MCF 10A (cell line): ENCODE measurements at regions of chr5 and their contacts with region 1.

Region 1: DNA sequence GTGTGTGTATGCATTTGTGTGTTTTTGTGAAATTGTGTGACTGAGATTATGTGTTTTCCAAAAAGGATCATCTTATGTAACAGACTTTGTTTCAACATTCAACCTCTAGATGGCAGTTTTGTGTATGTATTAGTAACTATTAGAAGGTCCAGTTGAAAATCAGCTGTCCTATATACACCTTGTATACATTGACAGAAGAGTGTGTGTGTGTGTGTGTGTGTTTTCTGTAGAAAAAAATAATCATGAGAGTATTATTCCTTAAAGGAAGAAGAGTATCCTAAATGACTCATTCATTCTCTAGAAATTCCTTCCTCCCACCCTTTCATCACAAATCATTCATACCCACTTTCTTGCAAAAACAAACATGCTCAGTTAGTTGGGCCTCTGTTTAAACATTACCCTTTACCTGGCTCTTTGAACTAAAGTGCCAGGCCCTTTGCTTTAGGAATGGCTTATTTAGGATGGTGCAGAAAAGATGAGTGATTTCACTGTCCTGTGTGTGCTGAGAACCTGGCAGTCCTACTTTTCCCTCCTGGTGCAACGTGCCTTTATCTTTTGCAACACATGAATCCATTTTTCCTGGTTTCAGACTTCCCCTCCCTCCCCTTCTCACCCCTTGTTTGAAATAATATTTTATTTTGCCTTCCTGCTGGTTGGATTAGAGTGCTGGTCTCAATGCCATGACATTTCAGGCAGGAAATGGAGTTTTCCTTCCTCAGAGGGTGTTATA is 152.2 kb downstream of the ARHGAP26 start:
- DNase-seq: peak; percentile 56
- H3K4me3 Mint-ChIP-seq: no peak overlapping the region
- H3K27ac Mint-ChIP-seq: no peak overlapping the region
- H3K4me1 Mint-ChIP-seq: peaks cover 25% of the 10 kb centered on the region
- H3K27me3 Mint-ChIP-seq: no peaks in the 10 kb centered on the region
- CTCF ChIP-seq: peak; percentile 68

Region 2: DNA sequence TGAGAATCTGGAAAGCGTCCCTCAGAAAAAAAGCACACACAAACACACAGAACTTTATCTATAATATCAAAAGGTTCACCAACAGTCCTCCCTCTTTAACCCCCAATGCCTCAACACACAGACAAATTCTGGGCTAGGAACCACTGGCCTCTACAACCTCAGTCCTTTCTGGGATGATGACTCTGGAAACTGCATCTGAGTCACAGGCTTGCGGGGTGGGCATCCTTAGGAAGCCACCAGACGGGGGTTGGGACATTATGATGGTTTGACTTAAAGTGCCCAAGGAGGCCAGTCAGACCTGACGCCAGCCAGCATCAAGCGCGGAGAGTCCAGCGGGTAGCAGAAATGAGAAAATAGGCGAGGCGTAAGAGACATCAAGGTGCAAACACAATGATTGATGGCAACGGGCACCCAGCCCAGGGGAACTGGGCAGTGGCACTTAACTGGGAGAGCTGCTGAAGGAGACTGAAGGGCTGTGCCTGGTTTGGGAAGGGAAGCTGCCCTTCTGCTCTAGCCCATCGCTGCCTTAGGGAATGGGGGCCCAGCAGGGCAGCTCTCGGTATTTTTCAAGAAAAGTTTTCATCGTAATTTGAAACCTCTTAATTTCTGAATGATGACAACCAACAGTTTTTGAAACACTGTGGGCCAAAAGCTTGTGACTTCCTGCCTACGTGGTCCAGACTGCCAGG is 618.2 kb before region 1 on chr5:
- CTCF ChIA-PET with region 1: no interaction called
- POLR2A ChIA-PET with region 1: no interaction called
- intact Hi-C with region 1: no loop called
- DNase-seq: no peak
- H3K4me3 Mint-ChIP-seq: no peak overlapping the region
- H3K27ac Mint-ChIP-seq: no peak overlapping the region
- H3K4me1 Mint-ChIP-seq: peaks cover 6% of the 10 kb centered on the region
- H3K27me3 Mint-ChIP-seq: no peaks in the 10 kb centered on the region
- CTCF ChIP-seq: no peak

Region 3: GRCh38 chr5:143002459-143003328 is 80.3 kb after region 1 on chr5:
- CTCF ChIA-PET with region 1: interaction called, 16 read pairs
- POLR2A ChIA-PET with region 1: interaction called, 12 read pairs
- intact Hi-C with region 1: loop called (anchors 1 kb)
- DNase-seq: peak; percentile 96
- H3K4me3 Mint-ChIP-seq: no peak overlapping the region
- H3K27ac Mint-ChIP-seq: peak overlapping the region; percentile 92
- H3K4me1 Mint-ChIP-seq: peaks cover 29% of the 10 kb centered on the region
- H3K27me3 Mint-ChIP-seq: no peaks in the 10 kb centered on the region
- CTCF ChIP-seq: peak; percentile 72

Region 4: GRCh38 chr5:143177263-143177983 is 255.0 kb after region 1 on chr5:
- CTCF ChIA-PET with region 1: interaction called, 3 read pairs
- POLR2A ChIA-PET with region 1: no interaction called
- intact Hi-C with region 1: loop called (anchors 10 kb)
- DNase-seq: peak; percentile 99
- H3K4me3 Mint-ChIP-seq: no peak overlapping the region
- H3K27ac Mint-ChIP-seq: peak overlapping the region; percentile 86
- H3K4me1 Mint-ChIP-seq: peaks cover 16% of the 10 kb centered on the region
- H3K27me3 Mint-ChIP-seq: no peaks in the 10 kb centered on the region
- CTCF ChIP-seq: no peak

Region 5: GRCh38 chr5:143314659-143315058 is 392.3 kb after region 1 on chr5:
- CTCF ChIA-PET with region 1: interaction called, 4 read pairs
- POLR2A ChIA-PET with region 1: interaction called, 3 read pairs
- intact Hi-C with region 1: loop called (anchors 10 kb)
- DNase-seq: peak; percentile 68
- H3K4me3 Mint-ChIP-seq: no peak overlapping the region
- H3K27ac Mint-ChIP-seq: peak overlapping the region; percentile 73
- H3K4me1 Mint-ChIP-seq: peaks cover 69% of the 10 kb centered on the region
- H3K27me3 Mint-ChIP-seq: no peaks in the 10 kb centered on the region
- CTCF ChIP-seq: no peak

Region 6: DNA sequence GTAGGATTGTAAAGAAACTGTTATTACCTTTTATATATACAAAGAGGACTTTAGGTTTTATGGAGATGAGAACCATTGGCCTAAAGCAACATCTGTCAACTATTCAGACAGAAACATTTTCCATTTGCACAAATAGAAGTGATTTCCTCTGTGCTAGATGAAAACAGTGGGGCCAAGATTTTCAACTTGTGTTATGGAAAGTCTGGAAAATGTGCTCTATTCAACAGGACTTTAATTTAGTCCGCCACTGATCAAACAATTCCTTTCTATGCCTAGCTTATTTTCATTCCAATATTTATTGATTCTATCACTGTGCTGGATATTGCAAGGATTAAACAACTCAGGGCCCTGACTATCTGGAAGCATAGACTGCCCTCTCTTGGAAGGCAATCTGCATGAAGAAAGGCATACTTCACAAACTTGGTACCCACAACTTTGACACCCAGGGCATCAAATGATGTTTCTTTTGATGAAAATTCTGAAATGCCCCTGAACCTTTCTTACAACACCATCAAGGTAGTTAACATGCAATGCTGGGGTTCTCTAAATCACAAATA is 762.9 kb after region 1 on chr5:
- CTCF ChIA-PET with region 1: interaction called, 7 read pairs
- POLR2A ChIA-PET with region 1: no interaction called
- intact Hi-C with region 1: loop called (anchors 1 kb)
- DNase-seq: peak; percentile 49
- H3K4me3 Mint-ChIP-seq: no peak overlapping the region
- H3K27ac Mint-ChIP-seq: no peak overlapping the region
- H3K4me1 Mint-ChIP-seq: no peaks in the 10 kb centered on the region
- H3K27me3 Mint-ChIP-seq: no peaks in the 10 kb centered on the region
- CTCF ChIP-seq: peak; percentile 51

Region 7: GRCh38 chr5:143812085-143812705 is 889.8 kb after region 1 on chr5 and contains the start of gene HMHB1:
- CTCF ChIA-PET with region 1: no interaction called
- POLR2A ChIA-PET with region 1: no interaction called
- intact Hi-C with region 1: no loop called
- DNase-seq: no peak
- H3K4me3 Mint-ChIP-seq: no peak within 1 kb of the TSS
- H3K27ac Mint-ChIP-seq: no peak within 1 kb of the TSS
- H3K4me1 Mint-ChIP-seq: no peaks in the 10 kb centered on the region
- H3K27me3 Mint-ChIP-seq: no peaks in the 10 kb centered on the region
- CTCF ChIP-seq: no peak
- total RNA-seq, gene HMHB1: not detected in 2 replicates

Region 8: GRCh38 chr5:144142139-144142823 is 1219.9 kb after region 1 on chr5:
- CTCF ChIA-PET with region 1: interaction called, 4 read pairs
- POLR2A ChIA-PET with region 1: no interaction called
- intact Hi-C with region 1: loop called (anchors 1 kb)
- DNase-seq: peak; percentile 70
- H3K4me3 Mint-ChIP-seq: no peak overlapping the region
- H3K27ac Mint-ChIP-seq: no peak overlapping the region
- H3K4me1 Mint-ChIP-seq: peaks cover 15% of the 10 kb centered on the region
- H3K27me3 Mint-ChIP-seq: no peaks in the 10 kb centered on the region
- CTCF ChIP-seq: peak; percentile 89